ENCODE measurements at regions of chr2 and their contacts with region 1.

Region 1: DNA sequence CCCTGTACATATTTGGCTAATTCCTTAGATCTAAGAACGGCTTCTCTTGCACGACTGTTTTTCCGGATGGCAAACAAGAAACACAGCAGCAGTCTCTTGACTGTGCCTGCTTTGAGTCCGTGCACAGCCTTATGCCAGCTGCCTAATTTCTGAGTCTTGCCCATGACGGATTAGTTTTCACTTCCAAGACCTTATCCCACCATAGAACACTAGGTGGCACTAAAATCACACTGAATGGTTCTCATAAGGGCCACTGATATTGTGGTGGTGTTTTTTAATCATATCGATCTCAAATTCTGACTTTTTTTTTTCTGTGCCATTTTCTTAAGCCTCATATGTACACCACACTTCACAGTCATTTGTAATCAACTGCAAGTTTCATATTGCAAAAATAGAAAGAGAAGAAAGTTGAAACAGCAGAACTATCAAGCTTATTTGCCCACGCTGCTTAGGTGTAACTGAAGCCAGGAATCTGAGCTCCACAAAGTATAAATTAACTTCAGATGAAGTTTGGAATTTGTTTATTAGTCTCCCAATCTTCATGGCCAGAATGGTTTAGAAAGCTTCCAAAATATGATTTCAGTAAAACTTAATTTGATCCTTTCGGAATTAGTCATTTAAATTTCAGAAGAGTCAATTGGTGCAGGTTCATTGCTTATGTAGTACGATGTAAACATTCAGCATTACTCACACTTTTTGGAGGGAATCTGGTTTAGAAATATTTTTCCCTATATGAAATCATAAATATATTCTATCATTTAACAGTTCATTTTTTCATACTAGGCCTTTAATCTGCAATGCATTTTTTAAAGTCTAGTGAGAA is 45.5 kb upstream of the SCN7A start:
- DNase-seq: peak; percentile 52
- H3K4me3 ChIP-seq: no peak overlapping the region
- H3K27ac ChIP-seq: no peak overlapping the region
- H3K4me1 ChIP-seq: no peaks in the 10 kb centered on the region
- CTCF ChIP-seq: peak; percentile 88

Region 2: DNA sequence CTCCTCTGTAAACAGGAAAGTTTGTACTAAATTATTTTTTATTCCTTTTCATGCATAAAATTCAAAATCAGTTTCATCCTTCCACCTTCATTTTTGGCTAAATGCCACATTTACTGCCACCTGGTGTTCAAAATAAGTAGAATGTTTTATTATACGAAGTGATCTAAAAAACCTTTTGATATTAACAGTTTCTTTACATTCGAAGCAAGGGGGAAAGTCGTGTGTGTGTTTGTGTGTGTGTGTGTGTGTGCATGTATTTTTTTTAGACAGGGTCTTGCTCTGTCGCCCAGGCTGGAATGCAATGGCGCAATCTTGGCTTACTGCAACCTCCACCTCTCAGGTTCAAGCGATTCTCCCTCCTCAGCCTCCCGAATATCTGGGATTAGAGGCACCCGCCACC is 154.8 kb before region 1 on chr2:
- CTCF ChIA-PET with region 1: no interaction called
- POLR2A ChIA-PET with region 1: no interaction called
- intact Hi-C with region 1: no loop called
- DNase-seq: peak; percentile 34
- H3K4me3 ChIP-seq: no peak overlapping the region
- H3K27ac ChIP-seq: no peak overlapping the region
- H3K4me1 ChIP-seq: no peaks in the 10 kb centered on the region
- CTCF ChIP-seq: peak; percentile 81

Region 3: GRCh38 chr2:167212014-167212648 is 672.6 kb after region 1 on chr2:
- CTCF ChIA-PET with region 1: no interaction called
- POLR2A ChIA-PET with region 1: no interaction called
- intact Hi-C with region 1: loop called (anchors 1 kb)
- DNase-seq: peak; percentile 23
- H3K4me3 ChIP-seq: no peak overlapping the region
- H3K27ac ChIP-seq: no peak overlapping the region
- H3K4me1 ChIP-seq: no peaks in the 10 kb centered on the region
- CTCF ChIP-seq: peak; percentile 86